ENCODE measurements at regions of chr6 and their contacts with region 1.

Region 1: GRCh38 chr6:73520688-73521350 is at the start of gene EEF1A1:
- DNase-seq: peak; percentile 99
- H3K4me3 ChIP-seq: peak within 1 kb of the TSS; percentile 63 to 92 (median 82)
- H3K27ac ChIP-seq: peak within 1 kb of the TSS; percentile 100
- H3K4me1 ChIP-seq: peaks cover 12 to 63% (median 46%) of the 10 kb centered on the region in 3 donors
- H3K27me3 ChIP-seq: no peaks in the 10 kb centered on the region
- CTCF ChIP-seq: peak in 1 of 6 experiments; percentile 12
- POLR2A ChIP-seq: peak; percentile 89 to 99 (median 99)
- total RNA-seq, gene EEF1A1: 4,136 to 11,610 (median 7,059) TPM

Region 2: DNA sequence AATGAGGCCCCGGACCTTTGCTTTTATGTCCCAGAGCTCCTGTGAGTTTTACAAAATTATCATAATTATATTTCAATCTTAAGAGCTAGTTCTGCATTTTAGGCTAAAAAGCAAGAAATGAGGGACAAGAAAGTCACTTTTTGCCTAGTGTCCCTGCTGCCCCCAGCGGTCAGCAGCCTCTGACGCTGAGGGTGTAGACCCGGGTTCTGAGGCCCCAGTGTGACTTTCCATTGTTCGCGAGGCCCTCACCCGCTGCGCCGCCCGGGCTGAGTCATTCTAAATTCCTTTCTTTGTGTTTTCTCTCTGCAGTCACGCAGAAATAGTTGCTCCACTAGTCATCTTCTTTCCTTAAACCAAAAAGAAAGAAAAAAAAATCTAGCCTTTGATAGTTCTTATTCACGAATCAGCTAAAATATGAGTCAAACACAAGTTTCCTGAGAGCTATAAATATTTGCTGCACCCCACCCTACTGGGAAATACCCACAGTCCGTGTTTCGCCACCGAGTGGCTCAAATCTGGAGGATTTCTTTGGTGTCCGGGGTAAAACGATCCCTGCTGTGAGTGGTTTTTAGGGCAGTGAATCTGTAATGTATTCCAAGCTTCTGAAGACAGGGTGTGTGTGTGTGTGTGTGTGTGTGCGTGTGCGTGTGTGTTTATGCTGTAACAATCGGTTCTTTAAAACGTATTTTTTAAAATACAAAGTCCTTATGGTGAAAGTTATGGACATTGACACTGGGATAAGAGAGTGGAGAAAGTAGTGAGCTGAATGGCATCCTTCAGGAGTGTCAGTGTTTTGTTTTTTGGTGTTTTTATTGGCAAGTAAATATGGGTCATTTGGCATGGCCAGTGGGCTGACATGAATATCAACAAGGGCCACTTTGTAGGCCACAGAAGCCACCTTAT is 59.7 kb after region 1 on chr6:
- intact Hi-C with region 1: loop called (anchors 10 kb)
- DNase-seq: peak; percentile 22
- H3K4me3 ChIP-seq: peak overlapping the region; percentile 12 to 50 (median 30)
- H3K27ac ChIP-seq: peak overlapping the region; percentile 80 to 96 (median 92)
- H3K4me1 ChIP-seq: peaks cover 18 to 32% (median 24%) of the 10 kb centered on the region in 3 donors
- H3K27me3 ChIP-seq: no peaks in the 10 kb centered on the region
- CTCF ChIP-seq: peak in 3 of 6 experiments; percentile 12 to 58 (median 30)
- POLR2A ChIP-seq: peak in 1 of 4 donors; percentile 32

Region 3: DNA sequence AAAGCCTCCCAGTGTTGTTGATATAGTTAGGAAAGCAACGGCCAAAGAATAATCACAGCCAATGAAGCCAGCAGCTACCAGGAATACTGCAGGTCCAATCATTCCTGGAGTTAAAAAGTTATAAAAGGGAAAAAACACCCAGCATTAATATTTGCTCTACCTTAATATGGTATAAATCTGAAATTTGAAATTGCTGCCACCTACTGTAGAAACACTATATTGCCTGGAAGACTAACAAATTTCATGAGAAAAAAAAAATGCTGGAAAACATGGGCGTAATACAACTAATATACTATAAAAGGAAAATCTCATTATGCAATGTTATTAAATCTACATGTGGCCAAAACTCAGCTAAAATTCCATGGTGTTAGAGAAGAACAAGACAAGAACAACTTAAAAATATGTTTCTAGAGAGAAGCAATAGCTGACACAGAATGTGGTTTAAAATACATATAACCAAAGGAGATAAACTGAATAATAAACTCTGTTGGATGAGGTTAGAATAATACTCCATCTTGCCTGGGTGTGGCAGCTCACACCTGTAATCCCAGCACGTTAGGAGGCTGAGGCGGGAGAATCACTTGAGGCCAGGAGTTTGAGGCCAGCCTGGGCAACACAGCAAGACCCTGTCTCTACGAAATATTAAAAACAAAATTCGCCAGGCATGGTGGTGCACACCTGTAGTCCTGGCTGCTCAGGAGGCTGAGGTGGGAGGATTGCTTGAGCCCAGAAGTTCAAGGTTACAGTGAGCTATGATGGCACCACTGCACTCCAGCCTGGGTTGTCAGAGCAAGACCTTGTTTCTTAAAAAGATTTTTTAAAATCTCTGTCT is 89.8 kb after region 1 on chr6:
- intact Hi-C with region 1: loop called (anchors 10 kb)
- DNase-seq: no peak
- H3K4me3 ChIP-seq: no peak overlapping the region
- H3K27ac ChIP-seq: no peak overlapping the region
- H3K4me1 ChIP-seq: peaks cover 0 to 9% (median 0%) of the 10 kb centered on the region in 3 donors
- H3K27me3 ChIP-seq: no peaks in the 10 kb centered on the region
- CTCF ChIP-seq: peak; percentile 54 to 79 (median 67)
- POLR2A ChIP-seq: no peak

Region 4: GRCh38 chr6:73898624-73899023 is 377.8 kb after region 1 on chr6:
- intact Hi-C with region 1: no loop called
- DNase-seq: no peak
- H3K4me3 ChIP-seq: no peak overlapping the region
- H3K27ac ChIP-seq: no peak overlapping the region
- H3K4me1 ChIP-seq: no peaks in the 10 kb centered on the region
- H3K27me3 ChIP-seq: no peaks in the 10 kb centered on the region
- CTCF ChIP-seq: no peak
- POLR2A ChIP-seq: no peak